Natural killer cell (primary cell): ENCODE measurements at regions of chr3 and their contacts with region 1.

Region 1: DNA sequence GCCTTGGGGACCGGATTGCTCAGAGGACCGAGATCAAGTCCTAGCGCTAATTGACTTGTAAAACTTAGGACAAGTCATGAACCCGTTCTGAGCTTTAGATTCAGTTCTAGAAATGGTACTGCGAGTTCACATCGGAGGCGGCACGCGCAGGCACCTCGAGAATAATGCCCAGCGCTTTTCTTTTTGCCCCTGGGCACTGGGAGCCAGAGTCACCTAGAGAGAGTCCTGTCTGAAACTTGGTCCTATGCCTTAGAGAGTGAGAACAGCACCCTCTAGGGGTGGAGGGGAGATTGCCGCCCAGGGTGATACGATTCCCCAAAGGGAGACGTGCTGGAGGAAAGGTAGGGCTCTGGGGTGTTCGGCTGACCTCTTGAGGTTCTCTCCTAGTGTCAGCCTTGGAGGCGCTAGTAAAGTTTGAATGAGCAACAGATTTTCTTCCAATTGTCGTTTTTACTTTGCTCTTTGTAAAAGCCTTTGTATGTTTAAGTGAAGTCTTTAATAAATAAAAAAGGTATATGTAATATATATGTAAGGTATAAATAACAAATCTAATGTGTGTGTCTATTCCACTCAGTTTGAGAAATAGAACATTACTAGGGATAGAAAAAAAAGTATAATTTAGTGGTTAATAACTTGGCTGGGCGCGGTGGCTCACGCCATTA is 826 bp downstream of the EEF1AKMT4 start:
- DNase-seq: peak; percentile 82 to 93
- ATAC-seq: peak; percentile 63 to 82 (median 64)
- H3K4me3 ChIP-seq: peak overlapping the region; percentile 76
- H3K4me3 Mint-ChIP-seq: peak overlapping the region; percentile 100
- H3K27ac ChIP-seq: peak overlapping the region; percentile 22
- H3K27ac Mint-ChIP-seq: peak overlapping the region; percentile 94 to 99
- H3K4me1 ChIP-seq: peaks cover 20% of the 10 kb centered on the region
- H3K4me1 Mint-ChIP-seq: peaks cover 17 to 21% of the 10 kb centered on the region in 2 donors
- H3K27me3 ChIP-seq: no peaks in the 10 kb centered on the region
- H3K27me3 Mint-ChIP-seq: no peaks in the 10 kb centered on the region
- CTCF ChIP-seq: peak; percentile 93

Region 2: GRCh38 chr3:183895296-183895695 is 355.0 kb before region 1 on chr3:
- intact Hi-C with region 1: loop called (anchors 10 kb)
- DNase-seq: peak in 1 of 2 donors; percentile 74
- ATAC-seq: peak; percentile 81 to 99 (median 92)
- H3K4me3 ChIP-seq: no peak overlapping the region
- H3K4me3 Mint-ChIP-seq: no peak overlapping the region
- H3K27ac ChIP-seq: no peak overlapping the region
- H3K27ac Mint-ChIP-seq: no peak overlapping the region
- H3K4me1 ChIP-seq: no peaks in the 10 kb centered on the region
- H3K4me1 Mint-ChIP-seq: no peaks in the 10 kb centered on the region
- H3K27me3 ChIP-seq: no peaks in the 10 kb centered on the region
- H3K27me3 Mint-ChIP-seq: peaks cover 15 to 17% of the 10 kb centered on the region in 2 donors
- CTCF ChIP-seq: peak; percentile 72

Region 3: DNA sequence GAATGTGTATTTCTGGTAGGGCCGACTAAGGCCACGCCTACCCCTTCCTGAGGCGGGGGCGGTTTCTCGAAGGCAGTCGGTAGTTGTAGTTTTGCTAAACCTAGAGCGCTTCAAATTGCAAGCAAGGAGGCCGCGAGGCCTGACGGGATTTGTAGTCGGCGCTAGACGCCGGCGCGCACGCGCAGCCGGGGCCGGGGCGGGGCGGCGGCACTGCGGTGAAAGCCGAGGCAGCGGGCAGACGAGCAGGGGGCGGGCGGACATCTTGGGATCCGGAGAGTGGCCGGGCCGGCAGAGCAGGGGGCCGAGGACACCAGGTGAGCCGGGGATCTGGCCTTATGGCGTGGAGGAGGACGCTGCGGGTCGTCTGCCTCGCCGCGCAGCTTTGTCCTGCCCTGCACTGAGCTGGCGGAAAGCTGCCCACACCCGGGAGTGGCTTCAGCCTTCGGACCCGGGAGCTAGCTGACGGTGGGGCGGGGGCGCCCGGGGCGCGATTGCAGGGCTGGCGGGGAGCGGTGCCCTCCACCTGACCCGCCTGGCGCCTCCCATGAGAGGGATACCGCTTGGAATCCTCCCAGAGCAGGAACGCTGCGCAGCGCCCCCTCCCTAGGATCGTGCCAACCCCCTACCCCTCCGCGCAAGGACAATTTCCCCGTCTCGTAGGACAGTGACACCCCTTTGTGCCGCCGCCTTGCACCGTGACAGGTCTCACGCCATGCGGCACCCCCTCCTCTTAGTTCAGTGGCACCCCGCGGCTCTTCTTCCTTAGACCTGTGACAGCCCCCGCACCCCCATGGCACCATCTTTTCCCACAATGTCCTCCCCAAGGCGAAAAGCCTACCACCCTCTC is 75.4 kb before region 1 on chr3 and contains the start of gene AP2M1:
- intact Hi-C with region 1: loop called (anchors 1 kb)
- DNase-seq: peak; percentile 98
- ATAC-seq: peak; percentile 97 to 100 (median 97)
- H3K4me3 ChIP-seq: peak within 1 kb of the TSS; percentile 96
- H3K4me3 Mint-ChIP-seq: peak within 1 kb of the TSS; percentile 93
- H3K27ac ChIP-seq: peak within 1 kb of the TSS; percentile 71
- H3K27ac Mint-ChIP-seq: peak within 1 kb of the TSS; percentile 71 to 92
- H3K4me1 ChIP-seq: peaks cover 30% of the 10 kb centered on the region
- H3K4me1 Mint-ChIP-seq: peaks cover 25 to 40% of the 10 kb centered on the region in 2 donors
- H3K27me3 ChIP-seq: no peaks in the 10 kb centered on the region
- H3K27me3 Mint-ChIP-seq: no peaks in the 10 kb centered on the region
- CTCF ChIP-seq: no peak
- total RNA-seq, gene AP2M1: 157 to 188 (median 168) TPM

Region 4: DNA sequence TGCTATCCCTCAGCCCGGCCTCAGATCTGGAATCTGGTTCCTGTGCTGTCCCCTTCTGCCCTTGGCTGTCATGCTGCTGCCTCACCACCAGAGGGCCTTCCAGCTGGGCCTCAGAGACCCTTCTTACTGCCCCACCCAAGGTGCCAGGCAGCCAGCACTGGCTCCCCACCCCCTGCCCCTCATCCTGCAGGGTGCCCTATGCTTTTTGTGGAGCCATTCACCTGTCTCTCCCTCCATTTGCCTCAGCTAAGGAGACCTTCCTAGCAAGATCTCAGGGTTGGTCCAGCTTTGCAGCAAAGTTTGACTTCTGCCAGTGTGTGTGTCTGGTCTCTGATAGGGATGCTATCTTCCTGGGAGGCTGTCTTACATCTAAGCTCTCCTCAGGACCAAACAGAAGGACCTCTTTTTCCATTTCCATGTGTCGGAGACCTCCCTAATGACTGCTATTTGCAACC is 22.8 kb before region 1 on chr3:
- intact Hi-C with region 1: loop called (anchors 1 kb)
- DNase-seq: peak; percentile 36 to 78
- ATAC-seq: peak; percentile 43 to 45 (median 44)
- H3K4me3 ChIP-seq: no peak overlapping the region
- H3K4me3 Mint-ChIP-seq: peak overlapping the region; percentile 0
- H3K27ac ChIP-seq: no peak overlapping the region
- H3K27ac Mint-ChIP-seq: no peak overlapping the region
- H3K4me1 ChIP-seq: peaks cover 19% of the 10 kb centered on the region
- H3K4me1 Mint-ChIP-seq: peaks cover 10 to 13% of the 10 kb centered on the region in 2 donors
- H3K27me3 ChIP-seq: peaks cover 20% of the 10 kb centered on the region
- H3K27me3 Mint-ChIP-seq: peaks cover 34 to 48% of the 10 kb centered on the region in 2 donors
- CTCF ChIP-seq: peak; percentile 89

Region 5: DNA sequence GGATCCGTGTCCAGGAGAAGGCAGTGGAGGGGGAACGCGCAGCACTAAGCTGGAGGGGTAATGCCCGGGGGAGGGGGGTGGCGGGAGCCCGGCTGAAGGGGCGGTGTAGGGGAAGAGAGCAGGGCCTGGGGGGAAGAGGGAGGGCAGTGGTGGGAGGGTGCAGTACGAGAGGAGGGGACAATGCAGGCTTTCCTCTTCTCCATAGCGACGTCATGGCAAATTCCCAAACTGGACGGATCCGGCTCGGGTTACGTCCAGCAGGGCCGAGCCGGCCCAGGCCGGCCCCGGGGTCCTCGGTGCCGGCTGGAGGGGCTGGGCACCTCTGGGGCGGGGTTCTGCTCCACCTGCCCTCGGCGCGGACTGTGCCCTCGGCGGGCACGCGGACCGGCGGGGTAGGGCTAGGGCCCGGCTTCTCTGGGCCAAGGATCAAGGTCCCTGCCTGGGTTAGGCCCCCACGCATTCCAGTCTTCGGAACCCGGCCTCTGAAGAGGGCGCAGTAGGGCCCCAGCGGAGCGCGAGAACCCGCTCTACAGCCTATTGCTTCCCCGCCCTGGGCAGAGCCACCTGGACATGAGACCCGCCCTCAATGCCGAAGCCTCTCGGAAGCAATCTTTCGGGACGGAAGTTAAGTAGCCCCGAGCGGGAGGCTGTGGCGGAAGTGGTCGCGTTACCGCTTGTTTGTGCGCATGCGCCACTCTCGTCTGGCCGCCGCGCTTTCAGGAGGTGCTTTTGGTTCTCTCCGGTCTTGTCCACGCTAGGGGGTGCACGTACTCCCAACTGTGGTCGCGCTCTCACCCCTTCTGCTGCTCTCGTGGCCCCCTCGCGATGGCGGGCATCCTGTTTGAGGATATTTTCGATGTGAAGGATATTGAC is 112.6 kb after region 1 on chr3:
- intact Hi-C with region 1: loop called (anchors 2 kb)
- DNase-seq: peak; percentile 93 to 98
- ATAC-seq: peak; percentile 76 to 88 (median 83)
- H3K4me3 ChIP-seq: peak overlapping the region; percentile 57
- H3K4me3 Mint-ChIP-seq: peak overlapping the region; percentile 99
- H3K27ac ChIP-seq: peak overlapping the region; percentile 86
- H3K27ac Mint-ChIP-seq: peak overlapping the region; percentile 96 to 97
- H3K4me1 ChIP-seq: peaks cover 32% of the 10 kb centered on the region
- H3K4me1 Mint-ChIP-seq: peaks cover 19 to 43% of the 10 kb centered on the region in 2 donors
- H3K27me3 ChIP-seq: no peaks in the 10 kb centered on the region
- H3K27me3 Mint-ChIP-seq: peaks cover 0 to 3% of the 10 kb centered on the region in 2 donors
- CTCF ChIP-seq: peak; percentile 61